A673 (cell line): ENCODE measurements at regions of chr4 and their contacts with region 1.

Region 1: DNA sequence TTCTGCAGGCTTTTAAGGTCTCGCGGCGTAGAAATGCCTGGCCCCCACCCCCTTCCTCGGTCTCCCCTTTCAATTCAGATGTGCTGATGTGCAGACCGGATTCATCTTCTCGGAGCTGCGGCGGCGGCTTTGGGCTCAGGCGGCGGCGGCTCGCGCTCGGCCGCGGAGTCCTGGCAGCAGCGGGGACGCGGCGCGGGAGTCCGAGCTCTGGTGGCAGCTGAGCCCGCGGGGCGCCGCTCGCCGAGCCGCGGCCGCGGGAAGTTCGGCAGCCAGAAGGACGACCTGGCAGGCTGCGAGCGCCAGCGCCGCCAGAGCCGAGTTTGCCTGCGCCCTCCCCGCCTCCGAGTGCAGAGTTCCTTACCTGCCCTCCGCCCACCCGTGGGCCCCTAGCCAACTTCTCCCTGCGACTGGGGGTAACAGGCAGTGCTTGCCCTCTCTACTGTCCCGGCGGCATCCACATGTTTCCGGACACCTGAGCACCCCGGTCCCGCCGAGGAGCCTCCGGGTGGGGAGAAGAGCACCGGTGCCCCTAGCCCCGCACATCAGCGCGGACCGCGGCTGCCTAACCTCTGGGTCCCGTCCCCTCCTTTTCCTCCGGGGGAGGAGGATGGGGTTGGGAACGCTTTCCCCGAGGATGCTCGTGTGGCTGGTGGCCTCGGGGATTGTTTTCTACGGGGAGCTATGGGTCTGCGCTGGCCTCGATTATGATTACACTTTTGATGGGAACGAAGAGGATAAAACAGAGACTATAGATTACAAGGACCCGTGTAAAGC is 448 bp downstream of the TLL1 start:
- DNase-seq: peak; percentile 53
- H3K4me3 ChIP-seq: peak overlapping the region; percentile 61
- H3K27ac ChIP-seq: peak overlapping the region; percentile 43
- H3K4me1 ChIP-seq: peaks cover 10% of the 10 kb centered on the region
- H3K27me3 ChIP-seq: peaks cover 52% of the 10 kb centered on the region
- CTCF ChIP-seq: no peak

Region 2: GRCh38 chr4:166091912-166092510 is 218.5 kb after region 1 on chr4:
- CTCF ChIA-PET with region 1: no interaction called
- POLR2A ChIA-PET with region 1: no interaction called
- intact Hi-C with region 1: loop called (anchors 5 kb)
- DNase-seq: peak; percentile 59
- H3K4me3 ChIP-seq: no peak overlapping the region
- H3K27ac ChIP-seq: no peak overlapping the region
- H3K4me1 ChIP-seq: peaks cover 10% of the 10 kb centered on the region
- H3K27me3 ChIP-seq: no peaks in the 10 kb centered on the region
- CTCF ChIP-seq: peak; percentile 80